GM13976 (cell line): ENCODE measurements at regions of chr22 and their contacts with region 1.

Region 1: DNA sequence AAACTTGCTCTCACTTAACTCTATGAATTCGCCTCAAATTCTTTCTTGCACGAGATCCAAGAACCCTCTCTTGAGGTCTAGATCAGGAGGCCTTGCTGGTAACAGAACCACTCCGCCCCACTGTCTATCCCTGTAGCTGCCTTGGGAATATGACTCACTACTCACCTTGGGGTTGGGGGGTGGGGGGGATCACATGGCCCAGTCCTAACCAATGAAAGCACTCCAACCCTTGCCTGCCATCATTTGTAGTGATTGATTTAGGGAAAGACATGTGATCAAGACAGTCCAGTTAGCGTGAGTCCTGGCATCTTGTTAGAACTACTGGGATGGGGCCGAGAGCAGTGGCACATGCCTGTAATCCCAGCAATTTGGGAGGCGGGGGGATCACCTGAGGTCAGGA is 4.8 kb upstream of the MRTFA start:
- DNase-seq: no peak
- CTCF ChIP-seq: no peak

Region 2: GRCh38 chr22:40436505-40437451 is 204.5 kb before region 1 on chr22:
- in situ Hi-C with region 1: loop called (anchors 10 kb)
- DNase-seq: peak; percentile 51
- CTCF ChIP-seq: no peak

Region 3: DNA sequence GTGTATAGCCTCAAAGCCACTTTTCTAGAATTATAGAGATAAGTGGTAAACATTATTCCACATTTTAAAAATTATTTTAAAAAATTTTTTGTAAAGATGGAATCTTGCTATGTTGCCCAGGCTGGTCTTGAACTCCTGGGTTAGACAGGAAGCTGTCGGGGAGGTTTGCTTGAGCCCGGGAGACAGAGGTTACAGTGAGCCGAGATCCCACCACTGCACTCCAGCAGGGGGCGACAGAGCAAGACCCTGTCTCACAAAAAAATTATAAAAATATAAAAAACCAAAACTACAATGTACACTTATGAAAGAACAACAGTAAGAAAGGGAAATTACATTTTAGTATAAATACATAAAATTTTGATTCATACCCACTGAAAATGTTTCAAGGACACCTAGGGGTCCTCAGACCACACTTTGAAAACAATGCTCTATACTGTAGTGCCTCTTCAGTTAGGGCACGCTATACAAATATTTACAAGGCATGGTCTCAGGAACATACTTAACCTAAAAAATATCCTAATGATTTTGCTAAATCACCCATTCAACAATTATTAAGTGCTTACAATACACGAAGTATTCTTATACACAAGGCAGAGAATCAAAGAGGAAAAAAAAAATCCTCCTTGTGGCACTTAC is 115.9 kb before region 1 on chr22:
- in situ Hi-C with region 1: loop called (anchors 10 kb)
- DNase-seq: no peak
- CTCF ChIP-seq: peak; percentile 59

Region 4: DNA sequence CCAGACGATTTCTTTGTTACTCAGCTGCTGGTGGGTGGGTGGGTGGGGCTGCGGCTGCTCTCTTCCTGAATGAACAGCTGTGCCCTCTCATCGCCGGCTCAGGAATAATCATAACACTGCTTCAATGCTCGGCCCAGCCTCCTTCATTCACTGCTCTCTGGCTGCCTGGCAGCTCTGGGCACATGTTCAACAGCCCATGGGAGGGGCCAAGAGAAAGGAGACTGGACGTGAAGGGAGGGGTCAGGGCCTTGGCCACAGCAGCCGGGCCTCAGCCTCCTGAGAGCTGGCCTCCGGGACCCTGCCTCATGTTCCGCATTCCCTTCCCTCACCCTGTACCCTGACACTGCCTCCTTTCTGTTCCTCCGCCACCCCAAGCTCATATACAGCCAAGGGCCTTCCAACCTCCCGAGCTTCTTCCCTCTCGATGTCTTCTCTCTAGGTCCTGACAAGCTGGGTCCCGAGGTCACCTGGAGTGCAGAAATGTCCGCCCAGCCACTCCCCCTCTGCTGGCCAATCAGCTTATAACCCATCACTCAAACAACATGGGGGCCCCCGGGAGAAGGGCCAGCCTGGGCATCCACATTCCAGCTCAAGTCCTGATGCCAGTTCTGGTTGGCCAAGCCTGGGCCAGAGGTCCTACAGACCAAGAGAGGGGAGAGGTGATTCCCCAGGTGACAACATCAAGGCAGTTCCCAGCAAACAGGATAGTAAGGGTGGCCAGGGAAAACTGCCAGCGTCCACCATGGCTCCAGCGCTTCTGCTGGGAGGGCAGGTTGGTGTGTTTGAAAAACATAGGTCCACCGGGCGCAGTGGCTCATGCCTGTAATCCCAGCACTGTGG is 916.4 kb after region 1 on chr22:
- in situ Hi-C with region 1: no loop called
- DNase-seq: peak; percentile 66
- CTCF ChIP-seq: no peak